IMR-90 (cell line): ENCODE measurements at regions of chr7 and their contacts with region 1.

Region 1: GRCh38 chr7:97145068-97145467 is 27.6 kb downstream of the SDHAF3 start:
- DNase-seq: peak; percentile 52
- ATAC-seq: peak; percentile 63; the same call in 1 of the 2 replicates
- H3K4me3 ChIP-seq: no peak overlapping the region
- H3K27ac ChIP-seq: no peak overlapping the region
- H3K4me1 ChIP-seq: no peaks in the 10 kb centered on the region
- H3K27me3 ChIP-seq: no peaks in the 10 kb centered on the region
- CTCF ChIP-seq: peak; percentile 68
- POLR2A ChIP-seq: no peak
- RAD21 ChIP-seq: peak; percentile 72

Region 2: DNA sequence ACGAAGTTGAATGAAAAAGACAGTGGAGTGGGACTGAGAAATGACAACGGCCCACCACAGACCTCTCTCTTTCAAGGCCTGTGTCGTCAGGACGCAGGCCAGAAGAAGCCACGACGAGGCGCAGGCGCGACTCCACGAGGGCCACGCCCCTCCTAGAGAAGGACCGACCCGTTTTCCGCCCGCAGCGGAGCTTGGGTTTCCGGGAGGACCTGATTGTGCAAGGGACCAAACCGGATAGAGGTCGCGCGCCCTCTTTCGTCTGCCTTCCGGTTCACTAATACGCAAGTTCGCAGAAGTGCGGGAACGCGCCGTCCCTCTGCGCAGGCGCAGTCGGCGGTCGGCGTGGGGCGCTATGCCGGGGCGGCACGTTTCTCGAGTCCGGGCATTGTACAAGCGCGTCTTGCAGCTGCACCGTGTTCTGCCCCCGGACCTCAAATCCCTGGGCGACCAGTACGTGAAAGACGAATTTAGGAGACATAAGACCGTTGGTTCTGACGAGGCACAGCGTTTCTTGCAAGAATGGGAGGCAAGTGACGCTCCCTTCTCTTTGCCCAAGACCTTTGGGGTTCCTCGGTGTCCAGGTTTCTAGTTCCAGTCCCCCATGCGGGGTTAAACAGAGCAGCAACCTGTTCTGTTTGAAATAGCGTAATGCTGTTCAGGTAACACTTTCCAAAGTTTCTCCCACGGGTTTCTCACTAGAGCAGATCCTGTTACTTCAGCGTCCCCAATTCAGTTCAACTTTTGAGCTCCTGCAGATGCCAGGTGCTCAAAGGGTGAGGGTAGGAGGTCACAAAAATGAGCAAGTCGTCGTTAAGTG is 27.5 kb before region 1 on chr7 and contains the start of gene SDHAF3:
- CTCF ChIA-PET with region 1: no interaction called
- POLR2A ChIA-PET with region 1: no interaction called
- dilution Hi-C with region 1: no loop called
- in situ Hi-C with region 1: no loop called
- intact Hi-C with region 1: loop called (anchors 1 kb)
- DNase-seq: peak; percentile 97
- ATAC-seq: peak; percentile 98
- H3K4me3 ChIP-seq: peak within 1 kb of the TSS; percentile 68
- H3K27ac ChIP-seq: peak within 1 kb of the TSS; percentile 73
- H3K4me1 ChIP-seq: no peaks in the 10 kb centered on the region
- H3K27me3 ChIP-seq: no peaks in the 10 kb centered on the region
- CTCF ChIP-seq: peak; percentile 11; the same call in 1 of the 2 replicates
- POLR2A ChIP-seq: no peak; the same call in 1 of the 2 replicates
- RAD21 ChIP-seq: no peak
- total RNA-seq, gene SDHAF3: 6.1 and 12.8 TPM in 2 replicates

Region 3: DNA sequence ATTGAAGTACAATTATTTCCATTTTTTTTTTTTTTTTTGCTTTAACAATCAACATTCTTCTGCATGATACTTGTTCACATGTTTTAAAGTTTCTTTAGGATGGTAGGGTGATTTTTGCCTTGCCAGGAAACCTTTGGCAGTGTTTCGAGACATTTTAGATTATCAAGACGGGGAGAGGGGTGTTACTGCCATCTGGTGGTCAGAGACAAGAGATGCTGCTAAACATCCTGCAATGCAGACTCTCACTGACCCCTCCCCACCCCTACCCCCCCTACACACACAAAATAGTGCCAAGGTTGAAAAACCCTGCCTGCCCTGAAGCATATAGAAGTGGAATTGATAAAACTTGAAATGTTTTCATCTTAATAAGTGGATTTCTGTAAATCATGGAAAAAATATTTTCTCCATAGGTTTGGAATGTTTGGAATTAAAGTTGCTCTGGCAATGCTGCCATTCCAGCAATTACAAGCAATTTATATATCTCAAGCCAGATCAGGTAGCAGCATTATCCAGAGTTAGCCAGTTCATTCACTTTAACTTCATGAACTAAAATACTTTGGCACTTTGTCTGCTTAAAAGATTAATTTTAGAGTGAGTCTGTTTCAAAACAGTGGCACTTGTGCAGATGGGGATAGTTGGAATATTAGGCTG is 34.5 kb after region 1 on chr7:
- CTCF ChIA-PET with region 1: interaction called, 3 read pairs
- POLR2A ChIA-PET with region 1: no interaction called
- dilution Hi-C with region 1: no loop called
- in situ Hi-C with region 1: no loop called
- intact Hi-C with region 1: loop called (anchors 1 kb)
- DNase-seq: peak; percentile 65
- ATAC-seq: peak; percentile 89
- H3K4me3 ChIP-seq: no peak overlapping the region
- H3K27ac ChIP-seq: no peak overlapping the region
- H3K4me1 ChIP-seq: no peaks in the 10 kb centered on the region
- H3K27me3 ChIP-seq: no peaks in the 10 kb centered on the region
- CTCF ChIP-seq: peak; percentile 68
- POLR2A ChIP-seq: no peak
- RAD21 ChIP-seq: peak; percentile 67

Region 4: DNA sequence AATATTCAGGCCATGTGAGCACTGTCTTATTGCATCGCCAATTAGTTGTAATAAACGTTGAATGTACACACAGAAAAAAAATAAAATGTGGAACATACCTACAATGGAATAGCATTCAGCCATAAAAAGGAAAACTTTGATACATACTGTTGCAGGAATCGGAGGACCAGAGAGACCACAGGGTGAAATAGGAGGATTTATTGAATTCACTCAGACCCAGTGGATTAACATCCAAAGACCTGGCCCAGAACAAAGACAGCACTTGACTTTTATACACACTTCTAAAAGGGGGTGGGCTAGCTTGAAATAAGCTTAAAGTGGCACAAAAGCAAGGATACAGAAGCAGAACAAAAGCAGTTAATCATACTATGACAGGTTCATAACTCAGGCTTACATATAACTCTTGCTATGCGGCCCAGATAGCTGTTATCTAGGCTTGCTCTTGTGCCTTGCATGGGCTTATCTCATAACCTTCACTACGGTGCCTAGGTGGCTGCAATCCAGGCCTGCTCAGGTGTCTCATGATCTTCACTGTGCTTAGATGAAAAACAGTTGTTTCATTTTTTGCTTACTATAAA is 294.7 kb after region 1 on chr7:
- CTCF ChIA-PET with region 1: no interaction called
- POLR2A ChIA-PET with region 1: no interaction called
- dilution Hi-C with region 1: no loop called
- in situ Hi-C with region 1: no loop called
- intact Hi-C with region 1: no loop called
- DNase-seq: no peak
- ATAC-seq: no peak
- H3K4me3 ChIP-seq: no peak overlapping the region
- H3K27ac ChIP-seq: no peak overlapping the region
- H3K4me1 ChIP-seq: no peaks in the 10 kb centered on the region
- H3K27me3 ChIP-seq: no peaks in the 10 kb centered on the region
- CTCF ChIP-seq: no peak
- POLR2A ChIP-seq: no peak
- RAD21 ChIP-seq: no peak

Region 5: GRCh38 chr7:97835296-97836138 is 690.4 kb after region 1 on chr7:
- CTCF ChIA-PET with region 1: interaction called, 3 read pairs
- POLR2A ChIA-PET with region 1: no interaction called
- dilution Hi-C with region 1: no loop called
- in situ Hi-C with region 1: loop called (anchors 10 kb)
- intact Hi-C with region 1: loop called (anchors 1 kb)
- DNase-seq: peak; percentile 63
- ATAC-seq: peak; percentile 98
- H3K4me3 ChIP-seq: no peak overlapping the region
- H3K27ac ChIP-seq: no peak overlapping the region
- H3K4me1 ChIP-seq: no peaks in the 10 kb centered on the region
- H3K27me3 ChIP-seq: peaks cover 9% of the 10 kb centered on the region
- CTCF ChIP-seq: peak; percentile 71
- POLR2A ChIP-seq: no peak
- RAD21 ChIP-seq: peak; percentile 58